Activated naive CD4-positive, alpha-beta T cell treated with anti-CD3 and anti-CD28 coated beads for 36 hours (primary cell): ENCODE measurements at regions of chr20 and their contacts with region 1.

Region 1: GRCh38 chr20:51531141-51531710 is 11.3 kb downstream of the NFATC2 start:
- DNase-seq: peak; percentile 93
- H3K4me3 Mint-ChIP-seq: peak overlapping the region; percentile 65
- H3K27ac Mint-ChIP-seq: peak overlapping the region; percentile 92
- H3K4me1 Mint-ChIP-seq: peaks cover 94% of the 10 kb centered on the region
- H3K27me3 Mint-ChIP-seq: no peaks in the 10 kb centered on the region

Region 2: GRCh38 chr20:51062065-51062464 is 469.2 kb before region 1 on chr20:
- CTCF ChIA-PET with region 1: no interaction called
- intact Hi-C with region 1: loop called (anchors 1 kb)
- DNase-seq: peak; percentile 83
- H3K4me3 Mint-ChIP-seq: no peak overlapping the region
- H3K27ac Mint-ChIP-seq: peak overlapping the region; percentile 79
- H3K4me1 Mint-ChIP-seq: peaks cover 44% of the 10 kb centered on the region
- H3K27me3 Mint-ChIP-seq: peaks cover 32% of the 10 kb centered on the region

Region 3: GRCh38 chr20:51423290-51423667 is 107.9 kb before region 1 on chr20:
- CTCF ChIA-PET with region 1: no interaction called
- intact Hi-C with region 1: loop called (anchors 2 kb)
- DNase-seq: peak; percentile 44
- H3K4me3 Mint-ChIP-seq: no peak overlapping the region
- H3K27ac Mint-ChIP-seq: no peak overlapping the region
- H3K4me1 Mint-ChIP-seq: peaks cover 42% of the 10 kb centered on the region
- H3K27me3 Mint-ChIP-seq: no peaks in the 10 kb centered on the region

Region 4: DNA sequence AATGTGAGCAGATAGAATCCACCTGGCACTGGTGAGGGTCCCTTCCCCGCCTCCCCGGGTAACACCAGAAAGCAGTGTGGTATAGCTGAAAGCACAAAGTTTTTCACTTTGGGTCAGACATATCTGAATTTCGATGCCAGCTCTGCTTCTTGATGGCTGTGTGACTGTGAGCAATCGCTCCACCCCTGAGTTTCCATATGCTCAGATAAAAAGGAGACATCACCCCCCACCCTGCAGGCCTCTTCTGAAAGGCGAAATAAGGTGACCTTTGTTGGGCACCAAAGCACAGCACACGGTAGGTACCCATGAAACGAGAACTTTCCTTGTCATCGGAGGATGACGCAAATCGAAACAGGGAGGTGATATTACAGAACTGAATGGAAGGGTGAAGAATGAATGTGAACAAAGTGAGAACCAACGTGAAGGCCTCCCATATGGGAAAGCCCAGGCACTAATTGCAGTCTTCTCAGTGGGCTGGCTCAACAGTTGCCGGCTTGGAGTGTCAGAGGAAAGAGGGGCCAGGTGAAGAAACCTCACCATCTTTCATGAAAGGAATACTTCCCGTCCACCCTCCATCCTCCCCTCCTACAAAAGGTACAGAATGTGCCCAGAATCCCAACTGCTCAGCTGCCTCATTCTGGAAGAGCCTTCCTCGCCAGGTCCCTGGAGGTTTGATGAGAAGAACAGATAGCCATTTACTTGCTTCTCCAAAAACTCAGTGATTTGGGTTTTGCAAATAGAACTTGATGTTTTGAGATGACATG is 50.5 kb before region 1 on chr20:
- CTCF ChIA-PET with region 1: interaction called, 3 read pairs
- intact Hi-C with region 1: loop called (anchors 1 kb)
- DNase-seq: peak; percentile 91
- H3K4me3 Mint-ChIP-seq: peak overlapping the region; percentile 58
- H3K27ac Mint-ChIP-seq: peak overlapping the region; percentile 97
- H3K4me1 Mint-ChIP-seq: peaks cover 84% of the 10 kb centered on the region
- H3K27me3 Mint-ChIP-seq: no peaks in the 10 kb centered on the region

Region 5: GRCh38 chr20:51500311-51500710 is 30.9 kb before region 1 on chr20:
- CTCF ChIA-PET with region 1: interaction called, 3 read pairs
- intact Hi-C with region 1: loop called (anchors 1 kb)
- DNase-seq: peak; percentile 70
- H3K4me3 Mint-ChIP-seq: no peak overlapping the region
- H3K27ac Mint-ChIP-seq: peak overlapping the region; percentile 87
- H3K4me1 Mint-ChIP-seq: peaks cover 68% of the 10 kb centered on the region
- H3K27me3 Mint-ChIP-seq: no peaks in the 10 kb centered on the region

Region 6: DNA sequence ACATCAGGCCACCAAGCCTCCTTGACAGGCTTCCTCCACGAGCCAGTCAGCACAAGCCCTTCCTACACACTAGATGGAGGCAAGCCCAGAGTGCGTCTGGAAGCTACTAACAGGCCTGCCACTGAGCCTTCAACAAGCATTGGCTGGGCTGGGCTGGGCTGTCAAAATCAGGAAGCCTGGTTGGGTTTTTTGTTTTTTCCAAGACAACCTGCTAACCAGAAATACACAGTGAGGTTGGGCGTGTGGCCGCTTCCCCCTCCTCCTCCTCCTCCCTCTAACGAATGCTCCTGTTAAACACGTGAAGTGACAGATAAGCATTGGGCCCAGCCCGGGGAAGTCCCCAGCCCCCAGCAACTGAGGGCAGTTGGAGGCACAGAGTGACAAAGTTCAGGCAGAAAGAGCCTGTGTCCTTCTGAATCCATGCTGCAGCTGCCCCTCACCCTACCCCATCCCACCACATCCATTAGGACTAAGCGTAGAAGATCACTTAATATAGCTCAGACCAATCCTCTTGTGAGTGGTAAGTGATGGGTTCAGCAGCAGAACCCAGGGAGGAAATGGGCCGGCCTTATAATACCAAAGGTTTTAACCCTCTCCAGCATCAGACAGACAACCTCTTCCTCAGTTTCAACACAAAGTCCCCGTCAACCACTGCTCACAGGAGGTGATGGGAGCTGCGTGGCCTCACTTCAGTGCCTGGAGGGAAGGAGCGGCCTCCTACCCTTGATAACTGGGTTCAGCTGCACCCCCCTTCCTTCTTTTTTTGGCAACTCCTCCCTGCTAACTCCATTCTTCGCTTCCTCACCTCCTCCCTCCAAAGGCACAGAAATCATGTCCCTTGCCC is 10.2 kb after region 1 on chr20:
- CTCF ChIA-PET with region 1: interaction called, 16 read pairs
- intact Hi-C with region 1: loop called (anchors 1 kb)
- DNase-seq: peak; percentile 91
- H3K4me3 Mint-ChIP-seq: peak overlapping the region; percentile 96
- H3K27ac Mint-ChIP-seq: peak overlapping the region; percentile 98
- H3K4me1 Mint-ChIP-seq: peaks cover 42% of the 10 kb centered on the region
- H3K27me3 Mint-ChIP-seq: no peaks in the 10 kb centered on the region

Region 7: DNA sequence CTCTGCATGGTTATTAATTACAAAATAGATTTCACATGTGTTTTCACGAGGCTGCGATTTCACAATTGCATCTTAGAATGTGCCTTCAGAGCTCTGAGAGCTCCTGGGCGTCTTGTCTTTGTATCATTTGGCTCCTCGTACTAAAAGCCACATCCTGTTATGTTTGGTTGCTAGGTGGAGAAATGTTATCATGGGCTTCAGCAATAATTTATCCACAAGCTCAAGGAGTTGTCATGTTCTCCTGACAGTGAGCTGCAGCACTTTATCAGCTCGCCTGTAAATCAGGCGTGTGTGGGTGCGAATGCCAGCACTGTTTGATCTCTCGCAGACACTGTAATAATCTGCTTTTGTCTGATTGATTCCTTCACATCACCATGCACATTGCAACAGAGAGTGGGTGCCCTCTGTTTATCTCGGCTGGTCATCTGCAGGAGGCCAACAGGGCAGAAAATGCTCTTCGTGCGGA is 879.0 kb after region 1 on chr20:
- CTCF ChIA-PET with region 1: no interaction called
- intact Hi-C with region 1: loop called (anchors 10 kb)
- DNase-seq: peak; percentile 54
- H3K4me3 Mint-ChIP-seq: peak overlapping the region; percentile 20
- H3K27ac Mint-ChIP-seq: peak overlapping the region; percentile 17
- H3K4me1 Mint-ChIP-seq: peaks cover 66% of the 10 kb centered on the region
- H3K27me3 Mint-ChIP-seq: no peaks in the 10 kb centered on the region